ENCODE measurements at regions of chr19 and their contacts with region 1.

Region 1: GRCh38 chr19:18058208-18059030 is 28.3 kb downstream of the IL12RB1 start:
- DNase-seq: peak; percentile 85 to 92 (median 91)
- H3K4me3 ChIP-seq: peak overlapping the region in 6 of 7 experiments; percentile 29 to 73 (median 54)
- H3K27ac ChIP-seq: no peak overlapping the region
- H3K4me1 ChIP-seq: peaks cover 0 to 23% (median 12%) of the 10 kb centered on the region in 4 experiments
- H3K27me3 ChIP-seq: no peaks in the 10 kb centered on the region

Region 2: DNA sequence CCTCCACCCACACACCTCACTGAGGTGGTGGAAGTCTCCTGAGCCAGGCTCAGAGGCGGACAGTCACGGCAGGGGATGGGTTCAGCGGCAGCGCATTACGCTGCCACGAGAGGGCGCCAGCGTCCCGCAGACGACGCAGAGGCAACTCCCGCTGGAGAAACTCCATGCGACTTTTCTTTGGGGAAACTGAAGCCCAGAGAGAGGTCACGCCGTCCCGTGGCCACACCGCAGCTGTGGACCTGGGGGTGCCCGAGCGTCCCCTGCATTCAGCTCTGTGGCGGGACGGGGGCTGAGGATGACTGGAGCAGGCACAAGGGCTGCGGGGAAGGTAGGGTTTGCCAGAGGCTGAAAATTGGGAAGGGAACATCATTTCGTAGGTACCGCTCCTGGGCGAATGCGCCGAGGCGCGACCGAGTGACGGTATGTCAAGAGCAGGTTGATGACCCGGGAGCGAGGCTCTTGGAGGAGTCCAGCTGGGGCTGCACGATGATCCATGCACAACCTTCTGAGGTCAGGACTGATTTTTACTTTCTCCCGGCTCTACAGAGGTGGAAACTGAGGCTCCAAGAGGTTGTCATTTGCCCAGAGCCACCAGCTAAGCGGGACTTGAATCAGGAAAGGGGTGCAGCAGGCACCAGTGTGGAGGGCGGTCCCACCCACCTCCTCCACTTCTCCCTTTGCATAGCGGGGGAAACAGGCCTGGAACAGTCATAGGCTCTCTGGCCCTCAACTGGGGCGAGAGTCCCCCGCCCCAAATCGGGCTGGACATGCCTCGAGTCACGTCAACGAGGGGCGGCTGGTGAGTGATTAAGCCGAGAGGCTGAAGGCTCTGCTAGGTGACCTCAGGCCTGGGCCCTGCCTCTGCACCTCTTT is 51.1 kb before region 1 on chr19:
- CTCF ChIA-PET with region 1: interaction called, 197 read pairs
- POLR2A ChIA-PET with region 1: interaction called, 32 read pairs
- DNase-seq: peak; percentile 70 to 79 (median 74)
- H3K4me3 ChIP-seq: peak overlapping the region; percentile 35 to 85 (median 59)
- H3K27ac ChIP-seq: peak overlapping the region in 1 of 2 experiments; percentile 50
- H3K4me1 ChIP-seq: peaks cover 2 to 44% (median 37%) of the 10 kb centered on the region in 4 experiments
- H3K27me3 ChIP-seq: no peaks in the 10 kb centered on the region

Region 3: GRCh38 chr19:18021121-18021755 is 37.2 kb before region 1 on chr19:
- CTCF ChIA-PET with region 1: interaction called, 21 read pairs
- POLR2A ChIA-PET with region 1: interaction called, 11 read pairs
- DNase-seq: peak; percentile 91 to 96 (median 96)
- H3K4me3 ChIP-seq: peak overlapping the region in 4 of 7 experiments; percentile 30 to 64 (median 47)
- H3K27ac ChIP-seq: peak overlapping the region; percentile 93 to 96
- H3K4me1 ChIP-seq: peaks cover 2 to 72% (median 65%) of the 10 kb centered on the region in 4 experiments
- H3K27me3 ChIP-seq: no peaks in the 10 kb centered on the region

Region 4: DNA sequence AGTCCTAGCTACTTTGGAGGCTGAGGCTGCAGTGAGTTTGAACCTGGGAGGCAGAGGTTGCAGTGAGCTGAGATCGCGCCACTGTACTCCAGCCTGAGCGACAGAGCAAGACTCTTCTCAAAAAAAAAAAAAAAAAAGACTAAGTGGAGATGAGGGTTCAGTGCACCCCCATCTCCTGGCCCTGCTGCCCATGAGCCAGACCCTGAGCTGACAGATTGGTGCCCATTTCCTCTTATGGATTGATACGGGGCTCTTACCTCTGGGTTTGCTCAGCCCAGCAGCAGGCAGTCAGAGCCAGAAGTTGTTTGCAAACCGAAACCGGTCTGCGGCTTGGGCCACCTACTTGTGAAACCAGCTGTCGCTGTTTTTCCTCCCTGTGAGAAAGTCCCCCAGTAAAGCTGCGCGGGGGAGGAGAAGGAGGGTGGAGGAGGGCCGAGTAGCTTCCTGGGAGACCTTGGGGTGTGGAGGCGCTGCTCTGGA is 13.6 kb before region 1 on chr19:
- CTCF ChIA-PET with region 1: interaction called, 19 read pairs
- POLR2A ChIA-PET with region 1: interaction called, 3 read pairs
- DNase-seq: peak; percentile 80 to 96 (median 95)
- H3K4me3 ChIP-seq: peak overlapping the region in 6 of 7 experiments; percentile 15 to 71 (median 59)
- H3K27ac ChIP-seq: peak overlapping the region in 1 of 2 experiments; percentile 27
- H3K4me1 ChIP-seq: peaks cover 0 to 40% (median 19%) of the 10 kb centered on the region in 4 experiments
- H3K27me3 ChIP-seq: no peaks in the 10 kb centered on the region

Region 5: DNA sequence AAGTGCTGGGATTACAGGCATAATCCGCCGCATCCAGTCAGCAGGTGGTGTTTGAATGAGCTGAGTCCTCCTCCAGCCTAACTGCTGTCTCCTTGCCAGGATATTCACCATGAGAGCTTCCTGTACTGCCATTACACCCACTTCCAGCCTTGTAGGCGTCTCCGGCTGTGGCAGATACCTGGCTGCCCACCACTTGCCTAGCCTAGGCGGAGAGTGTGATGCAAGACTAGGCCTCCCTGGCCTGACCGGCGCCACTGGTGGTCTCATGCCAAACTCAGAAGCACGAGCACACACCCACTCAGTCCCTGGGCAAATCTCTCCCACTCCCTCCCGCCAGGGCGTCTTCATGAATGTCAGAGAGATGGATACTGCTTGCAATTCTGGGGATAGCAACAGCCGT is 11.8 kb after region 1 on chr19:
- CTCF ChIA-PET with region 1: interaction called, 11 read pairs
- POLR2A ChIA-PET with region 1: interaction called, 3 read pairs
- DNase-seq: no peak
- H3K4me3 ChIP-seq: no peak overlapping the region
- H3K27ac ChIP-seq: no peak overlapping the region
- H3K4me1 ChIP-seq: peaks cover 0 to 6% (median 0%) of the 10 kb centered on the region in 4 experiments
- H3K27me3 ChIP-seq: no peaks in the 10 kb centered on the region

Region 6: DNA sequence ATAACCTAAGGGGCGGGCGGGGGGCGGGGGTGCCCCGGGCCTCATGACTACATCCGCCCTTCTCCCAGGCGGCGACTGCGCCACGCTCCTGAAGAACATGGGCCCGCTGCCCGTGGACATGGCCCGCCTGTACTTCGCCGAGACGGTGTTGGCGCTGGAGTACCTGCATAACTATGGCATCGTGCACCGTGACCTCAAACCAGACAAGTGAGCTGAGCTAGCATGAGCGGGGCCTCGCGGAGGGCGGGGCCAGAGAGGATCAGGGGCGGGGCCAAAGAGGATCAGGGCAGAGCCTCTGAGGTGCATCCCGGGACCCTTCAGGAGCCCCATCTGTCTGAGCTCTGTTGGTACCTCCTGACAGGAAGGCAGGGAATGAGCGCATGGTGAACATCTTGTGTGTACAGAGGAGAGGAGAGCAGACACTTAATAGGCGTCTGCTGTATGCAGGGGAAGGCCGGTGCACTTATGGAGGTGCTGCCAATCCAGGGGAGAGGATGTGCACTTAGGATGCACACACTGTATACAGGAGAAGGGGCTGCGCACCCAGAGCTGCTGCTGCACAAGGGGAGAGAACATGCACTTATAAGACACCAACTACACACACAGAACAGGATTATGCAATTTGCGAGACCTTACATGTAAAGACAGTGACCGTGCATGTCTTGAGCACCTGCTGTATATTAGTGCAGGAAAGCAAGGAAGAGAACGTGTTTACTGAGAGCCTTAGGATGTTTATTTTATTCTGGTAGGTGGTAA is 73.6 kb after region 1 on chr19:
- CTCF ChIA-PET with region 1: no interaction called
- POLR2A ChIA-PET with region 1: no interaction called
- DNase-seq: no peak
- H3K4me3 ChIP-seq: no peak overlapping the region
- H3K27ac ChIP-seq: no peak overlapping the region
- H3K4me1 ChIP-seq: no peaks in the 10 kb centered on the region
- H3K27me3 ChIP-seq: no peaks in the 10 kb centered on the region